ENCODE measurements at regions of chr3 and their contacts with region 1.

Region 1: DNA sequence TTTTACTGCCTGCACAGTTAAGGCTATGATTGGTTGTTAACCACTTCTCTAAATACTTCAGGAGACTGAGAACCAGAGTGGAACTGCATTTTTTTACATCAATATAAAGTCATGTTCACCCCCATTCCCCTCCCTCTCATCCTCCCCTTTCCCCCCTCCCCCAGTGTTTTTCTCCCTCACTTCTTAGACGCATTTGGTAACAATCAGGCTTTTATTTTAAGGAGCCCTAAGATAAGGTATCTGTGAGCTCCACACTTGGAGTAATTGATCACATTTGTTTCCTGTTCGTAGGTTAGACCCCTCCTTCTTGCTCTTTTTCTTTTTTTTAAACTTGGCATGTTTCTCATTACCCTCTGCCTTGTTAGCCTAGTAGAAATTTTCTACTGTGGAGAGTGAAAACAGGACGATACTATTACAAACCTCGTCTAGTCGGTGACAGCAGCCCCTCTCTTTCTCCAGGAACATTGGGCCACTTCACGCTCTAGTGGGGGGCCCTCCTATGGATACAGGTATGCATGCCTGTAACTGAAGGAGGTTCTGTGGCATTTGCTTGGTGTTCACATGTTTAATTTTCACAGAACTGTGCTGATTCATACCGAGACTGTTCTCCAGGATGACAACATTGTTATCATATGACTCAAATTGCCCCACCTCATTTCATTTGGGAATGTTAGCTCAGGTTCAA is 314.4 kb downstream of the MECOM start:
- DNase-seq: peak; percentile 97
- ATAC-seq: peak; percentile 85
- H3K4me3 ChIP-seq: peak overlapping the region; percentile 47
- H3K27ac ChIP-seq: peak overlapping the region; percentile 89
- H3K4me1 ChIP-seq: peaks cover 52% of the 10 kb centered on the region
- H3K27me3 ChIP-seq: no peaks in the 10 kb centered on the region
- CTCF ChIP-seq: no peak

Region 2: DNA sequence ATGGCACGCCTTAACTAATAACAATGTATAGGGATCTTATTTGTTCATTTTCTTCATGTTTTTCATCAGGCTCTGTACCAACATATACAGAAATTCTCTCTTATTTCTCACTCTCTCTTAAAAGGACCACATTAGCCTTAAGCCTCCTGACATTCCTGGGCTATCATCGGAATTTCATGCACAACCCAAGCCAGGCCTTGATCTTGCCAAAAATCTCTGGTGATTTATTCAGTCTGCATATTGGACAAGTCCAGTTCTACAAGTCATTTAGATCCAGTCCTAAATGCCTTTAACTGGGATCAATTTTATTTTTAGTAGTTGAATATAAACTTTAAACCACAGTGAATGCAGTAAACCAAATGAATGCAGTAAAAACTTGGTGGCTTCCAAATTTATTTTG is 71.0 kb before region 1 on chr3:
- CTCF ChIA-PET with region 1: no interaction called
- POLR2A ChIA-PET with region 1: no interaction called
- intact Hi-C with region 1: loop called (anchors 2 kb)
- DNase-seq: no peak
- ATAC-seq: no peak
- H3K4me3 ChIP-seq: no peak overlapping the region
- H3K27ac ChIP-seq: no peak overlapping the region
- H3K4me1 ChIP-seq: peaks cover 29% of the 10 kb centered on the region
- H3K27me3 ChIP-seq: no peaks in the 10 kb centered on the region
- CTCF ChIP-seq: no peak

Region 3: GRCh38 chr3:169295126-169295525 is 53.9 kb before region 1 on chr3:
- CTCF ChIA-PET with region 1: no interaction called
- POLR2A ChIA-PET with region 1: no interaction called
- intact Hi-C with region 1: no loop called
- DNase-seq: peak; percentile 52
- ATAC-seq: no peak
- H3K4me3 ChIP-seq: no peak overlapping the region
- H3K27ac ChIP-seq: no peak overlapping the region
- H3K4me1 ChIP-seq: peaks cover 7% of the 10 kb centered on the region; the same call in 1 of the 2 replicates
- H3K27me3 ChIP-seq: no peaks in the 10 kb centered on the region
- CTCF ChIP-seq: peak; percentile 71

Region 4: DNA sequence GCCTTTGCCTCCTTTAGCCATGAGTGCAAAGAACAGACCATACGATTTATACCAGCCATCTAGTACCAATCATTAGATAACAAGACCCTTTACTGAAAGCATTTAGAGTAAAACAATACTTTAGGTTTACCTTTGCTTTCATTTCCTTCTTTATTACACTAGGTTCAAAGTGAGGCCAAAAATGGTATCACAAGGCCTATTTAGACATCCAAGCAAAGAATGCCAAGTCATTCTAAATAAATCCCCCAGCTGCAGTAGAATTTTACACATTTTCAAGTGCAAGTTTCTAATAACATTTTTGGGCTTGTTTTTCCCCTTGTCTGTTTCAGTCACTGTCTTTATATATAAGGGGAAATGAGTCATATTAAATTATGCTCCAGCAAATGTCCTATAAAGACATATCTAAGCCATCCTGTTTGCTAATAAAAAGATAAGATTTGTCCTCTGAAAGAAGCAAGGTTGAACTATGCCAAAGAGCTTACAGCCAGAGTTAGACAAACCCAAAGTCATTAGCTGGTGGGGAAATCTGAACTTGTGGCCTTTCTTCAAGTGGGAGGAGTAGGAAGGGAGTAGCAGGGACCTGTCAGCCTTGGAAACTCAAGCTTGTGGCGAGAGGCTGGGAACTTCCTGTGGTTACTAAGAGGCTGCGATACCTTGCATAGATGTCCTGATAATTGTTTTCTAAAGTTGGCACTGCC is 81.8 kb after region 1 on chr3:
- CTCF ChIA-PET with region 1: no interaction called
- POLR2A ChIA-PET with region 1: no interaction called
- intact Hi-C with region 1: loop called (anchors 5 kb)
- DNase-seq: peak; percentile 89
- ATAC-seq: peak; percentile 93
- H3K4me3 ChIP-seq: peak overlapping the region; percentile 18; the same call in 1 of the 2 replicates
- H3K27ac ChIP-seq: peak overlapping the region; percentile 89
- H3K4me1 ChIP-seq: peaks cover 41% of the 10 kb centered on the region
- H3K27me3 ChIP-seq: no peaks in the 10 kb centered on the region
- CTCF ChIP-seq: no peak

Region 5: DNA sequence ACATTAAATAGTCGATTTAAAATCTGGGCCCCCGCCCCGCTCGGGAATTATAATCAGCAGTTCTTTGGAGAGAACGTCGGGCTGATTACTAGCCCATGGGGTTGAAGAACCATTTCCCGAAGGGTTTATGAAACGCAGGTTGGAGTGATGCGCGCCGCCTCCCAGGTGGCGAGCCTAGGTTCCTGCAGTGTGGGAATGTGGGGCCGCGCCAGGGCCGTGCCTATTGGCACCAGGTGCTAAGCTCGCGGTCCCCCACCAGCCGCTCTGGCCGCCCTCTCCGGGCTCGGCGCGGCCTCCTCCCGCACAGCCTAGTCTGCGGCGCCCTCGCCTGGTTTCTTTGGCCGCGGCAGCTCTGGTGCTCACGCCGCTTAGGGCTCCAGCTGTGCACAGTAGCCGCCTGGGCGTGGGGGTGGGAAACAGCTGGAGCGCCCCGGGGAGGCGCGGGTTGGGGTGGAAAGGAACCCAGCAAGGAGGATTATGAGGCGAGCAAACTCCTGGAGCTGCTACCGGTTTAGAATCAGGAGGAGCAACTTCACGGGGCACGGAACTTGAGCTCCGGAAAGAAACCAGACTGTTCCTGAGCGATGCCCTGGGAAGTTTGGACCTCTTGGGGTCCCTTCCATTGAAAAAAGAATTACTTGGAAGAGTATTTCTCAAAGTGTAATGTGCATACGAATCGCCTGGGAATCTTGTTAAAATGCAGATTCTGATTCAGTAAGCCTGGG is 320.0 kb after region 1 on chr3:
- CTCF ChIA-PET with region 1: no interaction called
- POLR2A ChIA-PET with region 1: no interaction called
- intact Hi-C with region 1: loop called (anchors 10 kb)
- DNase-seq: peak; percentile 86
- ATAC-seq: peak; percentile 91
- H3K4me3 ChIP-seq: peak overlapping the region; percentile 75
- H3K27ac ChIP-seq: no peak overlapping the region
- H3K4me1 ChIP-seq: peaks cover 6% of the 10 kb centered on the region; the same call in 1 of the 2 replicates
- H3K27me3 ChIP-seq: no peaks in the 10 kb centered on the region
- CTCF ChIP-seq: peak; percentile 94

Region 6: GRCh38 chr3:170233530-170233929 is 884.5 kb after region 1 on chr3:
- CTCF ChIA-PET with region 1: no interaction called
- POLR2A ChIA-PET with region 1: no interaction called
- intact Hi-C with region 1: no loop called
- DNase-seq: peak; percentile 27
- ATAC-seq: no peak
- H3K4me3 ChIP-seq: no peak overlapping the region
- H3K27ac ChIP-seq: no peak overlapping the region
- H3K4me1 ChIP-seq: 0 out of 2 replicates have a peak, but pooled peaks cover 4% of the 10 kb centered on the region
- H3K27me3 ChIP-seq: no peaks in the 10 kb centered on the region
- CTCF ChIP-seq: no peak

Measured in PC-3 (cell line).